Endothelial cell of umbilical vein (primary cell): ENCODE measurements at regions of chr5 and their contacts with region 1.

Region 1: DNA sequence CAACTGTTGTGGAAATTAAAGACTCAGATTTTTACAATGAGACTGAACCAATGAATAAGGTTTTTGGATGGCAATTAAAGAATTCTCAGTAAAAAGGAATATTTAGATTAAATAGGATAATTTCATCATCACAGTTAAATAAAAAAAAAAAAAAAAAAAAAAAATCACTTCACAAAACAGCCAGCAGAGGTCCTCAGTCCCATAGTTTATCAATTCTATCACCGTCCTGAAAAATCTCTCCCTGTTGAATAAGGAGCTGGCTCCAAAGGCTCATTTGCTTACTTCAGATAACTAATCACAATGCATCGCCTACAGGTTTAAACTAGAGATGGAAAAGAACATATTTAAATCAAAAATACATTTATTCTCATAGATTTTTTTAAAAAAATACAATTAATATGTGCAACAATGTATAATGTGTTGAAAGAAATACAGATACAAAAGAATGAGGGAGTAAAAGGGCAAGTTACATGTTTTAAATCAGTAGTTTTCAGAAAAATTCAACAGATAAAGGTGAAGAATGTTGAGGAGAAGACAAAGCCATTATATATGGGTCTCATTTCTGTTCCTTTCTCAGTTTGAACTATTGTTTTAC is 175.8 kb upstream of the CHD1 start:
- DNase-seq: peak; percentile 67
- H3K4me3 ChIP-seq: no peak overlapping the region
- H3K27ac ChIP-seq: no peak overlapping the region
- H3K4me1 ChIP-seq: peaks cover 8% of the 10 kb centered on the region
- H3K27me3 ChIP-seq: no peaks in the 10 kb centered on the region
- CTCF ChIP-seq: peak; percentile 29 to 47
- POLR2A ChIP-seq: no peak

Region 2: DNA sequence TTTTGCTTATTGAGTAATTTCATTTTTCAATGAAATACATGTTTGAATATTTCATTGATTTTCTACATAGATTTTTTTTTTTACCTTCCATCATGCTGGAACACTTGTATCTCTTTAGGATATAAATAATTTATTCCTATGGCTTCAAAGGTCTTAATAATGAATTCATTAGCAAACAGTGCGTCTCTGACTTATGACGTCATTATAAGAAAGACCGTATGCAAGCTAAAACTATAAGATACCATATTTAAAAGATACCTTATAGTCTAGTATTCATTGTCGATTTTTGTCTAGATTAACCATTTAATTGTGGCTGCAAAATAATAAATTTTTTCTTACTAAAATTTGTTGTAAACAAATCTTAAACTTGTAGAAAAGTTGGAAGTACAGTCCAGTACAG is 11.9 kb after region 1 on chr5:
- CTCF ChIA-PET with region 1: interaction called, 22 read pairs
- POLR2A ChIA-PET with region 1: no interaction called
- dilution Hi-C with region 1: no loop called
- intact Hi-C with region 1: no loop called
- DNase-seq: no peak
- H3K4me3 ChIP-seq: no peak overlapping the region
- H3K27ac ChIP-seq: no peak overlapping the region
- H3K4me1 ChIP-seq: no peaks in the 10 kb centered on the region
- H3K27me3 ChIP-seq: no peaks in the 10 kb centered on the region
- CTCF ChIP-seq: no peak
- POLR2A ChIP-seq: no peak

Region 3: GRCh38 chr5:99156688-99157087 is 52.1 kb after region 1 on chr5:
- CTCF ChIA-PET with region 1: interaction called, 12 read pairs
- POLR2A ChIA-PET with region 1: no interaction called
- dilution Hi-C with region 1: no loop called
- intact Hi-C with region 1: no loop called
- DNase-seq: no peak
- H3K4me3 ChIP-seq: no peak overlapping the region
- H3K27ac ChIP-seq: no peak overlapping the region
- H3K4me1 ChIP-seq: no peaks in the 10 kb centered on the region
- H3K27me3 ChIP-seq: no peaks in the 10 kb centered on the region
- CTCF ChIP-seq: no peak
- POLR2A ChIP-seq: no peak

Region 4: GRCh38 chr5:99317136-99317535 is 212.5 kb after region 1 on chr5:
- CTCF ChIA-PET with region 1: interaction called, 4 read pairs
- POLR2A ChIA-PET with region 1: no interaction called
- dilution Hi-C with region 1: no loop called
- intact Hi-C with region 1: loop called (anchors 5 kb)
- DNase-seq: peak; percentile 35
- H3K4me3 ChIP-seq: no peak overlapping the region
- H3K27ac ChIP-seq: no peak overlapping the region
- H3K4me1 ChIP-seq: no peaks in the 10 kb centered on the region
- H3K27me3 ChIP-seq: no peaks in the 10 kb centered on the region
- CTCF ChIP-seq: no peak
- POLR2A ChIP-seq: no peak

Region 5: DNA sequence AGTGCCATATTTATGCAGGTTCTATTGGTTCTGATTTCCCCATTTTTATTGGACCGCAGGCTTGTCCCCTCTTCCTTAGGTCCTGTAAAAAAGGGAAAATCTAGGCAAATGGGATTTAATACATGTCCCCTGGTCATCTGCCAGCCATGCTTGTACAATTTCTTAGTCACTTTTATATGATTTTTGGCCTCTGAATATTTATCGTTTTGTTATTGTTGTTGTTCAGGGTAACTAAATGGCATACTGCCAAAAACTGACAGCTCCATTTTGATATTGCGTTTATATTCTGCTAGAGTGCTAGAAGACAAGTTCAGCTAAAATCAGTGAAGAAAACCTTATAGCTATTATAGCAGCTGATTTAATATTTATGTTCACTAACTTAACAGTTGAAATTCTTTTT is 660.4 kb after region 1 on chr5:
- CTCF ChIA-PET with region 1: no interaction called
- POLR2A ChIA-PET with region 1: no interaction called
- dilution Hi-C with region 1: no loop called
- intact Hi-C with region 1: no loop called
- DNase-seq: peak; percentile 27
- H3K4me3 ChIP-seq: no peak overlapping the region
- H3K27ac ChIP-seq: no peak overlapping the region
- H3K4me1 ChIP-seq: no peaks in the 10 kb centered on the region
- H3K27me3 ChIP-seq: no peaks in the 10 kb centered on the region
- CTCF ChIP-seq: no peak
- POLR2A ChIP-seq: no peak

Region 6: DNA sequence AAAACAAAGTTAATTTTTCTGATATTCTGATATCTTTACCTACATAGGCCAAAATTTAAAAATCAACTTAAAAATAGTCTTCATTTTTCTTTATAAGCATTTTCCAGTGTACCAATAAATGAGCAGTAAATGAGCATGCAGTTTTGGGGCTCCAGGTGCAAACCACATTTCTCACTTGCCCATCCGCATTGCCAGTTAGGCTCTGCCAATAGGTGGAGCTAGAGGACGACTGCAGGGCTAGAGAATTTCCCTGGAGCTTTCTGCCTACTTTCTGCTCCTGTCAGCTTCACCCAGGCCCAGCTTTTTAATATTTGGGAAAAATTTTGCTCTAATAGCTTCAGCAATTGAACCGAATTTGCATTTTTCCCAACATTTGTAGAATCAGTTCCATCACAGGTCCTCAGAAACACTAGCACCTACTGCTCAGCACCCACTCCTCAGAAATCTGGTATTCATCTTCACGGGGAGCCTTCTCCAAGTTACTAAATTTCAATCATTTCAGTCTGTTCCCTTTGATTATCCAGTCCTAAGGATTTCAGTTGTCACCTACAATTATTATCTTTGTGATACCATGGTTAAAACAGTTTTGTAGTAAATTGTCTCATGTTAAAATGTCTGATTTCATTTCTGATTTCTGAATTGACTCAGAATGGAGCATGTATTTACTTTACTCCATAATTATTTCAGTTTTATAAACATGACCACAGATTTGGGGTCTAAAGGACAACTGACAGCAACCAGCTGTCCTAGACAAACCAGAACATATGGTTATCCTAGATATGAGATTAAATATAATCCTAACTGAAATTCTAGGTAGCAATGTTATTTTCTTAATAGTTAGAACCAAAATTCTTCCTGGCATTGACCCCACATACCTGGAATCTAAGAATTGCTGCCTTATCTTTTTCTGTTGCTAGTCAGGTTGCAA is 1325.9 kb after region 1 on chr5:
- CTCF ChIA-PET with region 1: interaction called, 17 read pairs
- POLR2A ChIA-PET with region 1: no interaction called
- dilution Hi-C with region 1: no loop called
- intact Hi-C with region 1: no loop called
- DNase-seq: peak; percentile 54
- H3K4me3 ChIP-seq: no peak overlapping the region
- H3K27ac ChIP-seq: no peak overlapping the region
- H3K4me1 ChIP-seq: no peaks in the 10 kb centered on the region
- H3K27me3 ChIP-seq: no peaks in the 10 kb centered on the region
- CTCF ChIP-seq: peak; percentile 90 to 96
- POLR2A ChIP-seq: no peak

Region 7: GRCh38 chr5:100615362-100615761 is 1510.7 kb after region 1 on chr5:
- CTCF ChIA-PET with region 1: interaction called, 3 read pairs
- POLR2A ChIA-PET with region 1: no interaction called
- dilution Hi-C with region 1: no loop called
- intact Hi-C with region 1: loop called (anchors 10 kb)
- DNase-seq: no peak
- H3K4me3 ChIP-seq: no peak overlapping the region
- H3K27ac ChIP-seq: no peak overlapping the region
- H3K4me1 ChIP-seq: peaks cover 4% of the 10 kb centered on the region
- H3K27me3 ChIP-seq: no peaks in the 10 kb centered on the region
- CTCF ChIP-seq: no peak
- POLR2A ChIP-seq: no peak